Naive thymus-derived CD8-positive, alpha-beta T cell (primary cell): ENCODE measurements at regions of chr2 and their contacts with region 1.

Region 1: DNA sequence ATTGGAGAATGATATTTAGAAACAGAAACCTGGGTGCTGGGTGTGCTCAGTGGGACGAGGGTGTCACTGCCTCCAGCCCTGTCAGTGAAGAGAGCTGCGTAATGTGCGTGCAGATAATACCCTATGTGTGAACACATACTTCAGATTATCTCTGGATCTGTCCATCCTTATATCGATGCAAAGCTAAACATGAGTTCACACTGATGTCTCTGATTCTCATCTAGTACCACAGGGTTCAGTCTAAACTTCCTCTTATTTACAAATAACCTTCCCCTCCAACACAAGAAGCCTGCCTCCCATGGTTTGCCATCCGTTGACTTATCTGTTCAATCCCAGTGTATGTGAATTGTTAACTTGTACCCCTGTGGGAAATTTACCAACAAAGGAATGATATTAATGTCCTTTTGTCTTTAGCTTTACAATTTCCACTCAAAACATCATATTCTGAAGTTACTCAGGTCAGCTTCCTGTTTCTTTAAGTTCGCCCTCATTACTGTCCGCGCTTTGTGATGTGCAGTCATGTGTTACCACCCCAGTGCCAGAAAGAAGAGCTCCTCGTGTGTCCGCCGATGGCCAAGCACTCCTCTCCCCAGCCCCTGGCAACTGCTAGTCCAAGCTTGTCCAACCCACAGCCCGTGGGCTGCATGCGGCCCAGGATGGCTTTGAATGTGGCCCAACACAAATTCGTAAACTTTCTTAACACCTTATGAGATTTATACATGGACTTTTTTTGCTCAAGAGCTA is 108.2 kb downstream of the RTP5 start:
- DNase-seq: no peak
- ATAC-seq: no peak
- H3K4me3 Mint-ChIP-seq: no peak overlapping the region
- H3K27ac Mint-ChIP-seq: peak overlapping the region in 5 of 10 donors; percentile 13 to 77 (median 49)
- H3K4me1 Mint-ChIP-seq: peaks cover 0 to 7% (median 1%) of the 10 kb centered on the region in 4 donors
- H3K27me3 Mint-ChIP-seq: no peaks in the 10 kb centered on the region

Region 2: GRCh38 chr2:241933179-241933911 is 44.4 kb before region 1 on chr2:
- POLR2A ChIA-PET with region 1: no interaction called
- DNase-seq: no peak
- ATAC-seq: no peak
- H3K4me3 Mint-ChIP-seq: no peak overlapping the region
- H3K27ac Mint-ChIP-seq: no peak overlapping the region
- H3K4me1 Mint-ChIP-seq: peaks cover 0 to 10% (median 4%) of the 10 kb centered on the region in 4 donors
- H3K27me3 Mint-ChIP-seq: no peaks in the 10 kb centered on the region

Region 3: DNA sequence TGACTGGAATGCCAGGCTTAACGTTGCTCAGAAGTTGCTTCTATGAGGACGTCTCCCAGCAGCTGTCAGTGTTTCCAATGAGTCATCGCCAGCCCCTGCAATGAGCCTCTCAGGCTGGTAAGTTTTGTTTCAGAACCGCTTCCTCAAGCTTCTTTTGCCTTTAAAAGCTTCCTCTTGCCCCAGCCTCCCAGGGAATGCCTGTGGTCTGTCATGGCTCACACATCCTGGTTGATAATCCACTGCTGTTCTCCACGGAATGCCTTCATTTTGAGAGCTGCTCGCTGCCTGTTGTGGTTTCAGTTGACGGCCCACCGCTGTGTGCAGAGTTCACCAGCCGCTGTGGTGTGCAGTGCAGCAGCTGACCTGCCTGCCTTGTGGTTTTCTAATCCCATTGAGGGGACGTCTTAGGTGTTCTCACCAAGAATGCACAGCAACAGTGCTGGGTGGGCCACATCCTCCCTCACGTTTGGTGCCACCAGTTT is 11.8 kb before region 1 on chr2:
- POLR2A ChIA-PET with region 1: interaction called, 11 read pairs
- DNase-seq: peak in 9 of 10 donors; percentile 9 to 78 (median 57)
- ATAC-seq: peak; percentile 96 to 98
- H3K4me3 Mint-ChIP-seq: peak overlapping the region; percentile 65 to 92 (median 86)
- H3K27ac Mint-ChIP-seq: peak overlapping the region; percentile 59 to 94 (median 88)
- H3K4me1 Mint-ChIP-seq: peaks cover 21 to 54% (median 36%) of the 10 kb centered on the region in 4 donors
- H3K27me3 Mint-ChIP-seq: no peaks in the 10 kb centered on the region